ENCODE measurements at regions of chr22 and their contacts with region 1.

Region 1: DNA sequence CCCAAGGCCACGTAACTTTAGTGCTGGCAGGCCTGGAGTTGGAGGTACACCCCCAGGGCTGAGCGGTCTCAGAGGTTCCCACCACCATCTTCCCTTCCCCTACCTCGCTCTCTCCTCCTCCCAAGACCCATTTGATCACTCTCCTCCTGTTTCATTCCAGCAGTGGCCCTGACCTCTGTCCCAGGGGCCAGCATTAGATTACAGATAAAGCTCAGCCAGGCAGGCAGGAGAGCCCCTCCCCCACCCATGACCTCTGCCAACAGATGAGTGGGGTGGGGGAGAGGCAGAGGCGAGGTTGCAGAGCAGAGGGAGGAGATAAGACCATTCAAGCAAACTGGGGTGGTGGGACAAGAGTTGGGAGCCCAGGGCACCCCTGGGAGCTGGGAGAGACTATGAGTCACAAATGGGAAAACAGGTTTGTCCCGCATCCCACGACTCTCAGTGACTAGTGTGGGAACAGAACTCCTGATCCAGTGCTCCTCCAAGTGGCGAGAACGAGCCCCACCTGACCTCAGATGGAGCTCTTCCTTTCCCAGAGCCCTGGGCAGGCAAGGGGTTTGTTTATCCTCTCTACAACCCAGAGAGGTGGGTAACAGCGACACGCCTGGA is 367.9 kb downstream of the MN1 start:
- DNase-seq: no peak
- H3K4me3 ChIP-seq: no peak overlapping the region
- H3K27ac ChIP-seq: no peak overlapping the region
- H3K4me1 ChIP-seq: peaks cover 0 to 16% (median 7%) of the 10 kb centered on the region in 4 experiments; a peak in 6 of 7 replicates
- H3K27me3 ChIP-seq: peaks cover 0 to 2% (median 0%) of the 10 kb centered on the region in 4 experiments; a peak in 1 of 7 replicates
- CTCF ChIP-seq: no peak
- EP300 ChIP-seq: no peak
- POLR2A ChIP-seq: no peak
- RAD21 ChIP-seq: no peak

Region 2: DNA sequence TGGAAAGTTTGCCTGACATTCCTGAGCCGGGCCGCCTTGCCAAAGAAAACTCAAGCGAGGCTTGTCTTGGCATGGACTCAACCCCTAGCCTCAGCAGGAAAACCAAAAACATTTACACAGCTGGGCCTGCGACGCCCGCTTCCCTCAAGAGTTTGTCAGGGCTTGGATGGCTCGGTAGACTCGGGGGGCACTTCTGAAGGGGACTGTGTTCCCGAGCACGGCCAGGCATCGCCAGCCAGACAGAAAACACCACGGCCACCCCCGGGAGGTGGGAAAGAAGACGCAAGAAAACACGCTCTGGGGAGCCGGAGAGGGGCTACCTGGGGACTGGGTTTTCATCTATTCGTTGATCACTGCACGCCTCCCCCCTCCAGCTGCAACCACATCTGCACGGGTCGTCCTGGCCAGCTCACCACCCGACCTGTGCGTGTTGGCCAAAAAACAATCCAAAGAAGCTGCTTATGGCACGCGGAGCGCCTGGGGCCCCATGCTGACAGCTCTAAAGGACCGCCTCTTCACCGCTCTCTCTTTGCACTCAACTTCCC is 12.8 kb before region 1 on chr22:
- CTCF ChIA-PET with region 1: interaction called, 17 read pairs
- POLR2A ChIA-PET with region 1: interaction called, 3 read pairs
- DNase-seq: no peak
- H3K4me3 ChIP-seq: no peak overlapping the region
- H3K27ac ChIP-seq: no peak overlapping the region
- H3K4me1 ChIP-seq: peaks cover 2 to 23% (median 13%) of the 10 kb centered on the region in 4 experiments
- H3K27me3 ChIP-seq: no peaks in the 10 kb centered on the region
- CTCF ChIP-seq: no peak
- EP300 ChIP-seq: no peak
- POLR2A ChIP-seq: no peak
- RAD21 ChIP-seq: no peak